ENCODE measurements at regions of chr1 and their contacts with region 1.

Region 1: DNA sequence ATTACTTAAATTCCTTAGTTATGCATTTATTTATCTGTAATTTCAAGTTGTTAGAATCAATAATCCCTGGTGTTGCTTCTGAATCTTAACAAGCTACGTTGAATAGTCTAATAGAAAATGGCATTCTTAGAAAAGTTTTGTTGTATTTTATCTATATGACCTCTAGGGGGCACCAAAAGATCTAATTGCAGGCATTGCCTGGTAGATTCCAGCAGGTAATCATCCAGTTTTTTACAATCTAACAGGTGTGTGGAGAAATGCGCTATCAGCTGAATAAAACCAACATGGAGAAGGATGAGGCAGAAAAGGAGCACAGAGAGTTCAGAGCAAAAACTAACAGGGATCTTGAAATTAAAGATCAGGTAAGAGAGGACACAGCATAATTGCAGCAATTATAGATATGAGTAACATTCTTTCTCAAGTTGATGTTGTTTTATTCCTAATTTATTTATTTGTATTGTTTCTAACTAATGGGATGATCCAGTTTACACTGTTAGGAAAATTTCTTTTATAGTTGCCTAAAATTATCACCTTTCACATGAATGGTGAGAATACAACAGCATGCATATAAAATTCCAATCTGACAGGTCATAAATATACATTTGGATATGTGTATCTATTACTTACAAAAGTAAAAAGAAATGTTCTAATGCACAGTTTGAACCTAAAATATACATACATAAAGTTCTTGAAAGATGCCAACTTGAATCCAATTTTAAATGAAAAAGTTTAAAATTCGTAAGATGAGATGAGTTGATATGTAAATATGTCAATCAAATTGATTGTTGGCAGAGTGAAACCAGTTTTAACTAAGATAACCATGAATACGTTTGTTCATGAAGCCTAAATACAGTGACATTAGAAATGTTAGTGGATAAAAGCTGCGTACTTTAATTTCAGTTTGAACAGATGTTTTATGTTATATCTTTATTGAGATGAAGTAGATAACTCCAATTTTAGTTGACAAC is 88.4 kb downstream of the SDCCAG8 start:
- DNase-seq: peak; percentile 37
- H3K4me3 ChIP-seq: no peak overlapping the region
- H3K27ac ChIP-seq: no peak overlapping the region
- H3K4me1 ChIP-seq: no peaks in the 10 kb centered on the region
- H3K27me3 ChIP-seq: no peaks in the 10 kb centered on the region
- CTCF ChIP-seq: peak; percentile 31 to 66

Region 2: DNA sequence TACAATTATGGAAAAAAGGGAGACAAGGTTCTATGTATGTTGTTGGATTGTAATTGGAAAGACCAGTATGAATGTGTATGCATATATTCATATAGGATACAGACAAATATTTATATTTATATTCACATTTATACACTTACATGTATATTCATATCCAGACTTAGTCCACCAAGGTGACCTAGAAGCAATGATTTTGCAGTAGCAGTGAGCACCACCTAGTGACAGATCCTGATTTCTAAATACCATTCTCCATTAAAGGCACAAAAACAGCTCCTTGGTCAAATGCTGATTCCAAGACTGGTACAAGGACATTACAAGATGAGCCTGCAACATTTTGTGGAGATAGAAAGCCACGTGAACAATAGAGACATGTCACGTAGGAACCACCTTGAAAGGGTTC is 65.0 kb after region 1 on chr1:
- CTCF ChIA-PET with region 1: no interaction called
- dilution Hi-C with region 1: no loop called
- in situ Hi-C with region 1: no loop called
- intact Hi-C with region 1: loop called (anchors 5 kb)
- DNase-seq: no peak
- H3K4me3 ChIP-seq: no peak overlapping the region
- H3K27ac ChIP-seq: no peak overlapping the region
- H3K4me1 ChIP-seq: no peaks in the 10 kb centered on the region
- H3K27me3 ChIP-seq: no peaks in the 10 kb centered on the region
- CTCF ChIP-seq: peak in 1 of 2 donors; percentile 4

Region 3: DNA sequence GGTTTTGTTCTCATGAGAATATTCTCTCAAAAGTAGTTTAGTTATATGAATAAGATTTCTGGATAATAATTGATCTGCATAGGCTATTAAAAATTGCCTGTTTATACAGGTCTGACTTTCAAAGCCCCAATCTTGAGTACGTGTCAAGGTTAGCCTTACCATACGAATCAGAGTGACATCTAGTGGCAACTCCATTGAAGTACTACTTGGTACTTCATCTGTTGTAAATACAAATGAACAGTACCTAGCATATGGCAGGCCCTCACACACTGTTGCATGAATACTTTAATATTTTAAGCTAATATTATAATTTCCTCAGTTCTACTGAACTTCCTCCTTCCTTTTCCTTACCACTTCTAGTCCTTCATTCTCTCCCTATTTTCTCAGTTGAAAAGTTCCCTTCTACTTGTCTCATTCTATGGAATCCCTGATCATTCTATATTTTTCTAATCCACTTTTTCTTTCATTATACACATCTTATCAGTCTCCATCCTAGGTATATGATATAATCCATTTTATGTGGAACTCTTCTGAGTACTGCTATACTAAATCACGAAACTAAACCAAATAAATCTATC is 404.5 kb after region 1 on chr1:
- CTCF ChIA-PET with region 1: no interaction called
- dilution Hi-C with region 1: no loop called
- in situ Hi-C with region 1: loop called in 1 of 2 experiments (anchors 10 kb)
- intact Hi-C with region 1: loop called (anchors 1 kb)
- DNase-seq: peak; percentile 56
- H3K4me3 ChIP-seq: no peak overlapping the region
- H3K27ac ChIP-seq: no peak overlapping the region
- H3K4me1 ChIP-seq: peaks cover 9% of the 10 kb centered on the region
- H3K27me3 ChIP-seq: no peaks in the 10 kb centered on the region
- CTCF ChIP-seq: peak; percentile 72 to 85

Region 4: GRCh38 chr1:244047621-244048471 is 703.6 kb after region 1 on chr1:
- CTCF ChIA-PET with region 1: no interaction called
- dilution Hi-C with region 1: no loop called
- in situ Hi-C with region 1: no loop called
- intact Hi-C with region 1: loop called (anchors 10 kb)
- DNase-seq: peak; percentile 99
- H3K4me3 ChIP-seq: peak overlapping the region; percentile 61 to 86 (median 82)
- H3K27ac ChIP-seq: peak overlapping the region; percentile 67
- H3K4me1 ChIP-seq: peaks cover 9% of the 10 kb centered on the region
- H3K27me3 ChIP-seq: peaks cover 8% of the 10 kb centered on the region
- CTCF ChIP-seq: no peak

Region 5: DNA sequence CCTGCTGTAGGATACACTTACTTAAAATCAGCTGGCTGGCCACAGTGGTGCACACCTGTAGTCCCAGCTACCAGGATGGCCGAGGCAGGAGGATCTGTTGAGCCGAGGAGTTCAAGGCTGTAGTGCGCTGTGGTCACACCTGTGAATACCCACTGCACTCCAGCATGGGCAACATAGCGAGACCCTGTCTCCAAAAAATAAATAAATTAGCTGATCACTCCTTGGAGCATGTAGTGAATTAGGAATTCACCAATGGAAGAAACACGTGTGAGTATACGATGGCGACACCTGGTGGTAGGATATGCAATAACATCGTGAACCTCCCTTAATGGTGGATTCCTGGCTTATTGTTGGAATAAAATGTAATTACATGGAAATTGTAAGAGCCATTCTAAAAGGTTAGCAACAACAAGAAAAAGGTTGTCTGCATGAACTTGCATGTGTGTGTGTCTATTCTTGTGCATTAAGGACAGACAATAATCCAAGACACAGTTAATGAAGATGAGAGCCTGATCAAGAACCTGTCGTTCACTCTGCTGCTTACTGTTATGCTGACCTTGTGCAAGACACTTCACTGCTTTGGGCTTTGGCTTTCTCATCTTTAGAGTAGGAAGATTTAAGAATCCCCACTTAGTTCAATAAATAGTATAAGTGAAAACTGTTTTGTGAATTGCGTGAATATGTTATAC is 1452.6 kb after region 1 on chr1:
- CTCF ChIA-PET with region 1: no interaction called
- dilution Hi-C with region 1: no loop called
- in situ Hi-C with region 1: no loop called
- intact Hi-C with region 1: loop called (anchors 10 kb)
- DNase-seq: peak; percentile 44
- H3K4me3 ChIP-seq: no peak overlapping the region
- H3K27ac ChIP-seq: no peak overlapping the region
- H3K4me1 ChIP-seq: no peaks in the 10 kb centered on the region
- H3K27me3 ChIP-seq: no peaks in the 10 kb centered on the region
- CTCF ChIP-seq: peak; percentile 74 to 91